ENCODE measurements at regions of chr3 and their contacts with region 1.

Region 1: GRCh38 chr3:15815696-15816095 is 17.9 kb upstream of the ANKRD28 start:
- DNase-seq: peak; percentile 83
- H3K4me3 ChIP-seq: no peak overlapping the region
- H3K27ac ChIP-seq: 0 out of 2 replicates have a peak overlapping the region, but pooled peaks have one; percentile 14
- H3K4me1 ChIP-seq: peaks cover 28% of the 10 kb centered on the region
- H3K27me3 ChIP-seq: no peaks in the 10 kb centered on the region

Region 2: DNA sequence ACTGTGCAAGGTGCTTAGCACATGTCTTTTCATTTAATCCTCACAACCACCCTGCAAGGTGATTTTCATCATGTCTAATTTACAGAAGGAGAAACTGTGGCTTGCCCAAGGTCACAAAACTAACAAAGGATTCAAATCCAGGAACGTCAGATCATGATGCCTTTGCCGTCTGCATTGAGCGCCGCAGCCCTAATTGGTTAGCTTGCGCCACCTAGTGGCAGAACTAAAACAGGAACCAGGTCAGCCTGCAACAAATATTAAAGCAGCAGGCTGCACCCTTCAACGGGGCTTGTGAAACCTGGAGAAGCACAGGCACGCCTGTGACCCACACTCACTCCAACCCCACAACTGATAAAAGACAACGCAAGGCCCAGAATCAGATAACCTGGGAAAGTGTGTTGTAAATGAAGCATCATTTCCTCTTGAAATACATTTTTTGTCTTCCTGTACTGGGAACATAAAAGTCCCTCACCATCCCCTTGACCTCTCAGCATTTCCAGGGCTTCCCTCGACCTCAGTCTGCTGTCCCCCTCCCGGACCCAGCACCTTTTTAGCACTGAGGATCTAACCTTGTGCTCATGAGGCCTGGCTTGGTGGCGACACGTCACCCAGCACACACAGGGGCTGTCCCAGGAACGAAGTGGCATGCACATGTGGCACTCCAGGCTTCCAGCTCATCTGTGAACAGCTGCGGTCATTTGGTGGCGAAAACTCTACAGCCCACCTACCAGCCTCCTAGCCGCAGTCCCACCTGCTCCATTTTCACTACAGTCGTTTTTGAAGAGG is 431.8 kb after region 1 on chr3:
- in situ Hi-C with region 1: loop called (anchors 5 kb)
- DNase-seq: peak; percentile 93
- H3K4me3 ChIP-seq: no peak overlapping the region
- H3K27ac ChIP-seq: no peak overlapping the region
- H3K4me1 ChIP-seq: peaks cover 15% of the 10 kb centered on the region
- H3K27me3 ChIP-seq: no peaks in the 10 kb centered on the region